ENCODE measurements at regions of chr4 and their contacts with region 1.

Region 1: DNA sequence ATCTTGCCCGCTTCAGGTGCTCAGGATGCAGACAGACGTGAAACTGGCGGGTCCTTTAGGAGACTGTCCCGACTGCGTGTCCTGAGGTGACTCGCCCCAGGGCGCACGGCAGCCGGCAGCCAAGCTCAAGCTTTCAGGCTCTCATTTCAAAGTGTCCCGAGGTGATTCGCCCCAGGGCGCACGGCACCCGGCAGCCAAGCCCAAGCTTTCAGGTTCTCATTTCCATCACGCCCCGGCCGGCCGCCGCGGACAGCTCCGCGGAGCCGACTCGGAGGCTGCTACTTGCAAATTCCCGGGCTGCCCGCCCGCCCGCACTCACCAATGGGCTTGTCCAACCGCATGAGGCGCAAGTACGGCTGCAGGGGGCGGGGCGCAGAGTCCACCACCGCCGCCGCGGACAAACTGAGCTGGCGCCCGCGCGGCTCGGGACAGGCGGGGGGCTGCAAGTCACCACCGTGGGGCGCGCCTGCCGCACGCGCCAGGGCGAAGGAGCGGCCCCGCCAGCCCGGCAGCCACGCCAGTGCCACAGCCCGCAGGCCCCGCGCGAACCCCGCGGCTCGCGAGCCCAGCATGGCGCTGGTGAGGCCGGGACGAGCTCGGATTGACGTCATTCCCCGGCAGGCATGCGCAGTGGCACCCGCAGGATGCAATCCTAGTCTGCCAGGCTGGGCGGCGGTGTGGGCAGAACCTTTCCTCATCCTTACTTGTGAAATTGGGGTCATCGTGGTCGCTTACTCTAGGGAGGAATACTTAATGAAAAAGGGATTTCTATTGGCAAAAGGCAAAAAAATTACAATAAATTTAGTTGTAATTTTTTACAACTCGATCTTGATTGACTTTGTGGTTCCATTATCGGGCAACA is at the start of gene COQ2:
- DNase-seq: peak; percentile 91 to 94
- ATAC-seq: peak; percentile 96
- H3K4me3 ChIP-seq: peak within 1 kb of the TSS; percentile 66 to 72 (median 68)
- H3K27ac ChIP-seq: peak within 1 kb of the TSS; percentile 85 to 97 (median 94)
- H3K4me1 ChIP-seq: peaks cover 26 to 30% of the 10 kb centered on the region in 2 donors
- H3K27me3 ChIP-seq: no peaks in the 10 kb centered on the region
- CTCF ChIP-seq: peak; percentile 31 to 55 (median 41)
- POLR2A ChIP-seq: peak; percentile 65 to 71
- total RNA-seq, gene COQ2: 9.0 to 15.7 (median 11.5) TPM

Region 2: GRCh38 chr4:82373816-82374625 is 910.4 kb before region 1 on chr4 and contains the start of gene HNRNPD:
- in situ Hi-C with region 1: no loop called
- intact Hi-C with region 1: loop called (anchors 10 kb)
- DNase-seq: peak; percentile 97 to 99
- ATAC-seq: peak; percentile 90 to 91
- H3K4me3 ChIP-seq: peak within 1 kb of the TSS; percentile 82 to 99 (median 96)
- H3K27ac ChIP-seq: peak within 1 kb of the TSS; percentile 99 to 100 (median 100)
- H3K4me1 ChIP-seq: peaks cover 42 to 44% of the 10 kb centered on the region in 2 donors
- H3K27me3 ChIP-seq: no peaks in the 10 kb centered on the region
- CTCF ChIP-seq: peak in 2 of 5 experiments; percentile 20 to 21
- POLR2A ChIP-seq: peak; percentile 92 to 95
- total RNA-seq, gene HNRNPD: 26.9 to 46.0 (median 37.4) TPM

Region 3: GRCh38 chr4:82833696-82834313 is 450.6 kb before region 1 on chr4:
- in situ Hi-C with region 1: no loop called
- intact Hi-C with region 1: loop called (anchors 10 kb)
- DNase-seq: peak; percentile 14 to 53
- ATAC-seq: peak; percentile 100
- H3K4me3 ChIP-seq: no peak overlapping the region
- H3K27ac ChIP-seq: peak overlapping the region; percentile 70 to 84 (median 80)
- H3K4me1 ChIP-seq: peaks cover 10 to 26% of the 10 kb centered on the region in 2 donors
- H3K27me3 ChIP-seq: no peaks in the 10 kb centered on the region
- CTCF ChIP-seq: no peak
- POLR2A ChIP-seq: no peak

Region 4: DNA sequence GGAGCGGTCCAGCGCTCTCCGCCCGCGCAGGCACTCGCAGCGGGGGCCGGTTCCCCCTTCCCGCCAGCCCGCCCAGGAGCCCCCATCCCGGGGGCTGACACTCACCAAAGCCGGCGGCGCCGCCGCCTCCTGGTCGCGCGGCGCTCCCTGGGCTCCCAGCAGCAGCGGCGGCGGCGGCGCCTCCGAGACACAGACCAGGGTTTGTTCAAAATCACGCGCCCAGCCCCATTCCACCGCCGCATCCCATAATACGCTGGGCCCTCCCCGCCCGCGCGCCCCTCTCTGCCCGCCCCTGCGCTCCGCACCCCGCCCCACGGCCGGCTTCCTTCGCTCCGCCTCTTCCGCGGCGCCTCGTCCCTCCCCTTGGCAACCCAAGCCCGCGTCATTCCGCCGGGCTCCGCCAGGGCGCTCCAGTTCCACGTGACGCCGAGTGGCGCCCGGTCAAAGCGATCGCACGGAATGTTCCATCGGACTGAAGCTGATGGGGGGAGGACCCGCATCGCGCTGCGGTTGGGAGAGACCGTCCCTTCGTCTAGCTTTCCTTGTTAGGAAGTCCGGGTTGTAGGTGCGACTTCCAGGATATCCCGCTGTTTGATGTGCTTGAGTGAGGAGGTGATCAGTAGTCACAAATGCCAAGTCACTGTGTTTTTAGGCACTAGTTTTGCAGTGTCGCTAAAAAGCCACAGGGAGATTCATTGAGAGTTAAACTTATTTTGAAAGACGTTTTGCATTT is 271.6 kb before region 1 on chr4:
- in situ Hi-C with region 1: no loop called
- intact Hi-C with region 1: loop called (anchors 5 kb)
- DNase-seq: peak; percentile 93 to 96
- ATAC-seq: peak; percentile 90
- H3K4me3 ChIP-seq: peak overlapping the region; percentile 70 to 94 (median 79)
- H3K27ac ChIP-seq: peak overlapping the region; percentile 90 to 96 (median 94)
- H3K4me1 ChIP-seq: peaks cover 27 to 33% of the 10 kb centered on the region in 2 donors
- H3K27me3 ChIP-seq: no peaks in the 10 kb centered on the region
- CTCF ChIP-seq: peak; percentile 37 to 64 (median 53)
- POLR2A ChIP-seq: peak; percentile 86 to 93

Region 5: GRCh38 chr4:83074086-83074704 is 210.2 kb before region 1 on chr4:
- in situ Hi-C with region 1: no loop called
- intact Hi-C with region 1: loop called (anchors 2 kb)
- DNase-seq: no peak
- ATAC-seq: peak in 1 of 2 donors; percentile 52
- H3K4me3 ChIP-seq: no peak overlapping the region
- H3K27ac ChIP-seq: peak overlapping the region; percentile 65 to 75 (median 71)
- H3K4me1 ChIP-seq: peaks cover 15 to 21% of the 10 kb centered on the region in 2 donors
- H3K27me3 ChIP-seq: no peaks in the 10 kb centered on the region
- CTCF ChIP-seq: peak; percentile 27 to 65 (median 45)
- POLR2A ChIP-seq: no peak

Region 6: GRCh38 chr4:83455281-83456129 is 171.1 kb after region 1 on chr4 and contains the starts of genes HELQ and MRPS18C:
- in situ Hi-C with region 1: loop called in 2 of 4 experiments (anchors 10 to 25 kb)
- intact Hi-C with region 1: loop called (anchors 1 kb)
- DNase-seq: peak; percentile 98
- ATAC-seq: peak; percentile 99 to 100
- H3K4me3 ChIP-seq: peak within 1 kb of the TSS; percentile 79 to 98 (median 92)
- H3K27ac ChIP-seq: peak within 1 kb of the TSS; percentile 93 to 99 (median 98)
- H3K4me1 ChIP-seq: peaks cover 20 to 31% of the 10 kb centered on the region in 2 donors
- H3K27me3 ChIP-seq: no peaks in the 10 kb centered on the region
- CTCF ChIP-seq: peak in 3 of 5 experiments; percentile 7 to 44 (median 19)
- POLR2A ChIP-seq: peak; percentile 77 to 78
- total RNA-seq, gene HELQ: 13.1 to 18.4 (median 15.5) TPM
- total RNA-seq, gene MRPS18C: 22.2 to 57.9 (median 33.8) TPM